PC-9 (cell line): ENCODE measurements at regions of chrX and their contacts with region 1.

Region 1: GRCh38 chrX:24081661-24082264 is 27.0 kb downstream of the EIF2S3 start:
- DNase-seq: peak; percentile 76 to 77
- H3K4me3 ChIP-seq: no peak overlapping the region
- H3K27ac ChIP-seq: peak overlapping the region; percentile 29; the same call in 1 of the 2 replicates
- H3K4me1 ChIP-seq: peaks cover 27% of the 10 kb centered on the region
- H3K27me3 ChIP-seq: no peaks in the 10 kb centered on the region
- CTCF ChIP-seq: peak; percentile 60

Region 2: GRCh38 chrX:24137192-24137591 is 55.4 kb after region 1 on chrX:
- CTCF ChIA-PET with region 1: interaction called, 11 read pairs
- POLR2A ChIA-PET with region 1: no interaction called
- intact Hi-C with region 1: no loop called
- DNase-seq: no peak
- H3K4me3 ChIP-seq: no peak overlapping the region
- H3K27ac ChIP-seq: no peak overlapping the region
- H3K4me1 ChIP-seq: peaks cover 8% of the 10 kb centered on the region
- H3K27me3 ChIP-seq: no peaks in the 10 kb centered on the region
- CTCF ChIP-seq: no peak

Region 3: DNA sequence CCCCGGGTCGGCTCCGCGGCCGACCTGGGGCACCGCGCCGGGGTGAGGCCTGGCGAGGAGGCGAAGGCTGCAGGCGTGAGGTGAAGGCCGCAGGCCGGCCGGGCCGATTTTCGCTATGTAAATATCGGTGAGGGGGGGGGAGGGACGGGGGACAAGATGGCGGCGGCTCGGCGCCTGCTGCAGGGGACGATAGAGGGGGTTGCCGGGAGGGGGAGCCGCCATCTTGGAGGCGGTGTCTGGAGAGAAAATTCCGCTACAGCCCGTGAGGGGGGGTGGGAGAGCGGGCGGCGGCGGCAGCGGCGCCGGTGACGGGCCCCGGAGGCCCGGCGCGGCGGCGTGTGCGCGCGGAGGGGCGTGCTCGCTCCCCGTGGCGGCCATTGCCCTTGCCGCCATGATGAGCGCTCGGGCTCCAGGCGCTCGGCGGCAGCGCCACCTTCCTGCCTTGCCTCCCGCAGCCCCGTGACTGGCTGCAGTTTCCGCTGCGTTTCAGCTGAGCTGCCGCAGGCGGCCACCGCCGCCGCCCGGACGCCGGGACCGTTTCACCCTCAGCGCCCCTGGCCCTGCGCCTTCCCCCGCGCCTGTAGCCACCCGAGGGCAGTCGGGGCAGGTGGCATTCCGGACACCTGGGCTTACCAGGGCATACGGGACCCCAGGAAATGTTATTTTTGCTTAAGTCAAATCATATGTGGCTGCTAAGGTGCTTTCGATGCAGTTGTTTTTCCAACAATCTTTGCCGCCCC is 68.5 kb after region 1 on chrX:
- CTCF ChIA-PET with region 1: interaction called, 7 read pairs
- POLR2A ChIA-PET with region 1: interaction called, 6 read pairs
- intact Hi-C with region 1: loop called (anchors 1 kb)
- DNase-seq: peak; percentile 61 to 77
- H3K4me3 ChIP-seq: peak overlapping the region; percentile 90
- H3K27ac ChIP-seq: peak overlapping the region; percentile 86
- H3K4me1 ChIP-seq: peaks cover 72% of the 10 kb centered on the region
- H3K27me3 ChIP-seq: no peaks in the 10 kb centered on the region
- CTCF ChIP-seq: peak; percentile 24; the same call in 1 of the 2 replicates

Region 4: DNA sequence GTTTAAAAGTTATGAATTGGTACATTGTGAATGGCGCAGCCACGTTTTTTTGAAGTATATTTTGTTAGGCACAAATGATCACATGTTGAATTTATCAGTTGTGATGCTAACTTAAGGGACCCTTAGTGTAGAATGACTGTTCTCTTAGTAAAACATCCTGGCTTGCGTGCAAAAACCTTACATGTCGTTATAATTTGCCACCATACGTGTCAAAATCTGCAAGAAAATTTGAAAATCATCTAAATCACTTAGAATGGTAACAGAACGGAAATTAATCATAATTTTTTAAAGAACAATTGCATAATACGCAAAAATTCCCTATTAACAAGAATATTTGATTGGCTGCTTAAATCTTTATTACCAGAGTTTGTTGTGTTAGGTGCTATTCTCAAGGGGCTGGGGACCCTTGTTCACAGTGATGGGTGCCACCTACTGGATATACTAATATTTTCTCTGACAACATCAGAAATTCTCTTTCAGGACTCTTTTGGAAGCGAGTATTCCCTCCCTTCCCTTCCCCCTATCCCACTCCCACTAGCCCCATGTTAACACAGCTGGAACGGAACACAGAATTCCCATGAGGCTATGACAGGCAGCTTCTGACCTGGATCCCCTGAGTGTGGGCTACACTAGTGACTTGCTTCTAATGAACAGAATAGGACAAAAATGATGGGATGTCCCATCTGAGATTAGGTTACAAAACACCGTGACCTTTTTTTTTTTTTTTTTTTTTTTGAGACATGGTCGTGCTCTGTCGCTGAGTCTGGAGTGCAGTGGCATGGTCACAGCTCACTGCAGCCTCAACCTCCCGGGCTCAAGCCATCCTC is 160.3 kb after region 1 on chrX:
- CTCF ChIA-PET with region 1: no interaction called
- POLR2A ChIA-PET with region 1: interaction called, 6 read pairs
- intact Hi-C with region 1: loop called (anchors 1 kb)
- DNase-seq: no peak
- H3K4me3 ChIP-seq: no peak overlapping the region
- H3K27ac ChIP-seq: no peak overlapping the region
- H3K4me1 ChIP-seq: no peaks in the 10 kb centered on the region
- H3K27me3 ChIP-seq: no peaks in the 10 kb centered on the region
- CTCF ChIP-seq: peak; percentile 55

Region 5: DNA sequence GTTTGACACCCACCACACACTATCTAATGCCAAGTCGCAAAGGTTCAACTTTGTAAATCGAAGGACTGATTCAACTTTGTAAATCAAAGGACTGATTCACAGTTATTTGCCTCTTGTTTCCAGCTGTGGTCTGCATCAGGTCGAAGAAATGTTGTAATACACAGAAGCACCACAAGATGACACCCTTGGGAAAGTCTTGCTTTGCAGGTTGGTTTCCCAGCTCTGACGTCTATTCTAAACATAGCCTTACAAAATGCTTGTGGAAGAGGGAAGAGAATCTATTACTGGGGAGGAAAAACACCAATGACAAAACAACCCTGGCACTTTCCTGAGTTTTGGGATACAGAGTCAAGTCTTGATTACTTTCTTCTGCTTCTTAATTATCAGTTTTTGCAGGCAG is 314.0 kb after region 1 on chrX:
- CTCF ChIA-PET with region 1: no interaction called
- POLR2A ChIA-PET with region 1: no interaction called
- intact Hi-C with region 1: loop called (anchors 10 kb)
- DNase-seq: peak in 1 of 2 experiments; percentile 38
- H3K4me3 ChIP-seq: no peak overlapping the region
- H3K27ac ChIP-seq: no peak overlapping the region
- H3K4me1 ChIP-seq: no peaks in the 10 kb centered on the region
- H3K27me3 ChIP-seq: peaks cover 8% of the 10 kb centered on the region; the same call in 1 of the 2 replicates
- CTCF ChIP-seq: peak; percentile 79

Region 6: GRCh38 chrX:24498975-24499374 is 417.2 kb after region 1 on chrX:
- CTCF ChIA-PET with region 1: interaction called, 3 read pairs
- POLR2A ChIA-PET with region 1: no interaction called
- intact Hi-C with region 1: loop called (anchors 10 kb)
- DNase-seq: peak in 1 of 2 experiments; percentile 42
- H3K4me3 ChIP-seq: no peak overlapping the region
- H3K27ac ChIP-seq: no peak overlapping the region
- H3K4me1 ChIP-seq: peaks cover 11% of the 10 kb centered on the region
- H3K27me3 ChIP-seq: no peaks in the 10 kb centered on the region
- CTCF ChIP-seq: peak; percentile 70